ENCODE measurements at regions of chr4 and their contacts with region 1.

Region 1: GRCh38 chr4:20684852-20685763 is 15.2 kb upstream of the PACRGL start:
- DNase-seq: no peak
- H3K4me3 ChIP-seq: no peak overlapping the region
- H3K27ac ChIP-seq: 0 out of 2 replicates have a peak overlapping the region, but pooled peaks have one; percentile 42
- H3K4me1 ChIP-seq: no peaks in the 10 kb centered on the region
- H3K27me3 ChIP-seq: no peaks in the 10 kb centered on the region
- CTCF ChIP-seq: peak in 2 of 3 experiments; percentile 27 to 38; a peak in 2 of 4 replicates
- EP300 ChIP-seq: no peak
- POLR2A ChIP-seq: no peak
- RAD21 ChIP-seq: peak; percentile 68 to 76

Region 2: DNA sequence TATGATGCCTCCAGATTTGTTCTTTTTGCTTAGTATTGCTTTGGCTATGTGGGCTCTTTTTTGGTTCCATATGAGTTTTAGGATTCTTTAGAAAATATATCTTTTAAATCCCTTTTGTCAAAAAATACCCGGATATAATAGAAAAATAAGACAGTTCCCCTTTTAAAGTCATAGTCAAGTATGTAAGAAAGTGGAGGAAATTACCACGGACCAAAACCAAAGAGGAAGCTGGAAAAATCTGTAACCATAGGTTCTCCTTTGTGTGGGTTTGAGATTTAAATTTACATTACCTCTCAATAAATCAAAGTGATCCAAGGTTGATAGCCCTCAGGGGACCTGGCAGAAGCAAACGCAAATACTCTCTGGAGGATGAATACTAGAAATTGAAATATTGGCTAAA is 43.1 kb before region 1 on chr4:
- CTCF ChIA-PET with region 1: no interaction called
- POLR2A ChIA-PET with region 1: no interaction called
- DNase-seq: no peak
- H3K4me3 ChIP-seq: no peak overlapping the region
- H3K27ac ChIP-seq: no peak overlapping the region
- H3K4me1 ChIP-seq: no peaks in the 10 kb centered on the region
- H3K27me3 ChIP-seq: no peaks in the 10 kb centered on the region
- CTCF ChIP-seq: no peak
- EP300 ChIP-seq: no peak
- POLR2A ChIP-seq: no peak
- RAD21 ChIP-seq: no peak

Region 3: DNA sequence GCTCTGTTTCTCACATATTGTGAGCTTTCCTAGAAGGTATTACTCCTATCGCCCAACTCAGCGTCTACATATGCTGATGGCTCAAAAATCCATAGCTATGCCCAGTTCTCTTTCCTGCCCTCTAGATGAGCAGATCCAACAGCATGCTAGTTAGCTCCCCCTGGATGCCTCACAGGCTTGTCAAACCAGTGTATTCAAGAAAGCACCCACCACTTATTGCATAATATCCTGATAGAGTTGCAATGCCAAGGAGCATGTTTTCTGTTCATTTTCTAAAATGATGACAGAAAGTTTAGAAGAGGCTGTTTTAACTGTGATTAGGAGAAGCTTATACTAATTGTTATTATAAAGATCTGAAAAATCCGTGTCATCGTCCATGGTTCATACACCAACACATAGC is 13.3 kb after region 1 on chr4:
- CTCF ChIA-PET with region 1: interaction called, 10 read pairs
- POLR2A ChIA-PET with region 1: interaction called, 5 read pairs
- DNase-seq: no peak
- H3K4me3 ChIP-seq: no peak overlapping the region
- H3K27ac ChIP-seq: no peak overlapping the region
- H3K4me1 ChIP-seq: peaks cover 0 to 5% (median 2%) of the 10 kb centered on the region in 4 experiments; a peak in 4 of 7 replicates
- H3K27me3 ChIP-seq: no peaks in the 10 kb centered on the region; a peak in 1 of 7 replicates
- CTCF ChIP-seq: no peak
- EP300 ChIP-seq: no peak
- POLR2A ChIP-seq: no peak
- RAD21 ChIP-seq: no peak

Measured in H1 (cell line).